ENCODE measurements at regions of chr15 and their contacts with region 1.

Region 1: GRCh38 chr15:73087098-73087497 is 34.8 kb downstream of the NEO1 start:
- DNase-seq: no peak
- ATAC-seq: no peak

Region 2: DNA sequence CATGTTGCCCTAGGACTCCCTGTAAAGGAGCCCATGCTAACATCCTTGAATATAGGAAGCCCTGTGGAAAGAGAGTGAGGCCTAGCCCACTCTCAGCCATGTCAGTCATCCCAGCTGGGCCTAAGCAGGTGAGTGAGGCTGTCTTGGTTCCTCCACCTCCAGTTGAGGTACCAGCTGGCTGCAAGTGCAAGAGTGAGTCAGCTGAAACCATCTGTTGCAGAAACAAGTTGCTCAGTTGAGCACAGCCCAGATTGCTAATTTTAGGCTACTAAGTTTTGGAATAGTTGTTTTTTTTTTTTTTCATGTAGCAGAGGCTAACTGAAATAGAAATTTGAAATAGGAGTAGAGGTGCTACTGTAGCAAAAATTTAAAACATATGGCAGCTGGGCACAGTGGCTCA is 259.9 kb before region 1 on chr15:
- intact Hi-C with region 1: no loop called
- DNase-seq: no peak
- ATAC-seq: no peak

Region 3: GRCh38 chr15:72948662-72949061 is 138.4 kb before region 1 on chr15:
- intact Hi-C with region 1: no loop called
- DNase-seq: no peak
- ATAC-seq: no peak

Region 4: DNA sequence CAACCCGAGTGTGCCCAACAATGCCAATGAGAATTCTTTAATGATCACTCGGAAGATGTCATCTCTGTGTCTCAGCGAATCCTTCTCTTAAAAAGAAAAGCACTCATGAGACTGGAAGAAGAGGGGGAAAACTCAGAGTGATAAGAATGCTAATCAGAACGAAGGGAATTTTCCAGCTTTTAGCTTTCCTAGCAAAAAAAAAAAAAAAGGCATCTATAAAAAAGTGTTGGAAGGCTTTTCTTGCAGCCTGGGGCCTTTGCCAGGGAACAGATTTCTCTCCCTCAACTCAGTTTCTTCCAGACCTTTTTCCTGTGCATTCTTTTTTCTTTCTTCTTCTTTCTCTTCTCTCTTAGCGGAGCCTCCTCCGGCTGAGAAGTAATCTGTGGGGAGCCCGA is 115.3 kb before region 1 on chr15:
- intact Hi-C with region 1: no loop called
- DNase-seq: no peak
- ATAC-seq: peak; percentile 33

Region 5: GRCh38 chr15:73141216-73141900 is 54.3 kb after region 1 on chr15:
- intact Hi-C with region 1: loop called (anchors 2 kb)
- DNase-seq: no peak
- ATAC-seq: no peak